ENCODE measurements at regions of chr5 and their contacts with region 1.

Region 1: GRCh38 chr5:72138943-72139521 is 31.8 kb downstream of the MAP1B start:
- DNase-seq: peak; percentile 33
- H3K4me3 Mint-ChIP-seq: no peak overlapping the region
- H3K27ac Mint-ChIP-seq: no peak overlapping the region
- H3K4me1 Mint-ChIP-seq: peaks cover 21% of the 10 kb centered on the region
- H3K27me3 Mint-ChIP-seq: peaks cover 35% of the 10 kb centered on the region

Region 2: GRCh38 chr5:71782771-71783770 is 356.0 kb before region 1 on chr5:
- CTCF ChIA-PET with region 1: no interaction called
- intact Hi-C with region 1: loop called (anchors 2 kb)
- DNase-seq: peak; percentile 90
- H3K4me3 Mint-ChIP-seq: peak overlapping the region; percentile 37
- H3K27ac Mint-ChIP-seq: peak overlapping the region; percentile 52
- H3K4me1 Mint-ChIP-seq: peaks cover 25% of the 10 kb centered on the region
- H3K27me3 Mint-ChIP-seq: peaks cover 9% of the 10 kb centered on the region

Region 3: GRCh38 chr5:72205431-72206009 is 66.5 kb after region 1 on chr5:
- CTCF ChIA-PET with region 1: no interaction called
- intact Hi-C with region 1: loop called (anchors 2 kb)
- DNase-seq: no peak
- H3K4me3 Mint-ChIP-seq: no peak overlapping the region
- H3K27ac Mint-ChIP-seq: no peak overlapping the region
- H3K4me1 Mint-ChIP-seq: peaks cover 17% of the 10 kb centered on the region
- H3K27me3 Mint-ChIP-seq: no peaks in the 10 kb centered on the region

Region 4: GRCh38 chr5:72245951-72246532 is 107.0 kb after region 1 on chr5:
- CTCF ChIA-PET with region 1: no interaction called
- intact Hi-C with region 1: loop called (anchors 1 kb)
- DNase-seq: no peak
- H3K4me3 Mint-ChIP-seq: no peak overlapping the region
- H3K27ac Mint-ChIP-seq: no peak overlapping the region
- H3K4me1 Mint-ChIP-seq: peaks cover 25% of the 10 kb centered on the region
- H3K27me3 Mint-ChIP-seq: no peaks in the 10 kb centered on the region

Region 5: GRCh38 chr5:72307968-72308852 is 169.2 kb after region 1 on chr5:
- CTCF ChIA-PET with region 1: interaction called, 5 read pairs
- intact Hi-C with region 1: loop called (anchors 1 kb)
- DNase-seq: peak; percentile 94
- H3K4me3 Mint-ChIP-seq: peak overlapping the region; percentile 85
- H3K27ac Mint-ChIP-seq: peak overlapping the region; percentile 92
- H3K4me1 Mint-ChIP-seq: peaks cover 32% of the 10 kb centered on the region
- H3K27me3 Mint-ChIP-seq: no peaks in the 10 kb centered on the region

Region 6: GRCh38 chr5:72523960-72524582 is 385.0 kb after region 1 on chr5:
- CTCF ChIA-PET with region 1: no interaction called
- intact Hi-C with region 1: loop called (anchors 10 kb)
- DNase-seq: no peak
- H3K4me3 Mint-ChIP-seq: no peak overlapping the region
- H3K27ac Mint-ChIP-seq: no peak overlapping the region
- H3K4me1 Mint-ChIP-seq: no peaks in the 10 kb centered on the region
- H3K27me3 Mint-ChIP-seq: no peaks in the 10 kb centered on the region